Dendritic cell treated with granulocyte-macrophage colony-stimulating factor and Interleukin-4, amounts not matched to agents 40 ng/mL and 50 ng/mL, for 4 days (primary cell): ENCODE measurements at regions of chr7 and their contacts with region 1.

Region 1: DNA sequence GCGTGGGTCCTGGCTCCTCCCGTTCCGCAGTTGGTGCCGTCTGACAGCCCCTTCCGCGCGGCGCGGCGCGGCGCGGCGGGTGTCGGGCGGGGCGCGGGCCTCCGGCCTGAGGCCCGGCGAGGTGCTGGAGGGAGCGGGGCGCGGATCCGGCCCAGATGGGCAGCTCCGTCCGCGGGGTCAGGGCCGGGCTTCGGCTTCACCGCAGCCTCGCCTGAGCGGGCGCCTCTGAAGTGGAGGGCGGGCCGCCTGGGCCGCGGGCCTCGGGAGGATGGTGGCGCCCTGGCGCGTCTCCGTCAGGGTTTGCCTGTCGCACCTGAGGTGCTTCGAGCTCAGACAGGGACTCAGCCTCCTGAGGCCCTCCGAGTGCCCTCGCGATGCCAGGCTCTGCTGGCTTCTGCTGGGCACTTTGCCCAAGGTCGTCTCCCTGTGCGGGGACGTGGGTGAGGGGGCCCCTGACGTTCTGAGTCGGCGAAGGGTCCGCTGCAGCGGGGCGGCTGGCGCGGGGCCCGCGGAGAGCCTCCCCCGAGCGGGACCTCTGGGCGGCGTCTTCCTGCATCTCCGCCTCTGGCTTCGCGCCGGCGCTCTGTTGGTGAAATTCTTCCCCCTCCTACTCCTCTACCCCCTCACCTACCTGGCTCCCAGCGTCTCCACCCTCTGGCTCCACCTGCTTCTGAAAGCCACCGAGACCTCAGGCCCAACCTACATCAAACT is 473 bp downstream of the ADCK2 start:
- H3K4me3 Mint-ChIP-seq: peak overlapping the region; percentile 92
- H3K27ac Mint-ChIP-seq: peak overlapping the region; percentile 87
- H3K4me1 Mint-ChIP-seq: peaks cover 56% of the 10 kb centered on the region
- H3K27me3 Mint-ChIP-seq: no peaks in the 10 kb centered on the region

Region 2: DNA sequence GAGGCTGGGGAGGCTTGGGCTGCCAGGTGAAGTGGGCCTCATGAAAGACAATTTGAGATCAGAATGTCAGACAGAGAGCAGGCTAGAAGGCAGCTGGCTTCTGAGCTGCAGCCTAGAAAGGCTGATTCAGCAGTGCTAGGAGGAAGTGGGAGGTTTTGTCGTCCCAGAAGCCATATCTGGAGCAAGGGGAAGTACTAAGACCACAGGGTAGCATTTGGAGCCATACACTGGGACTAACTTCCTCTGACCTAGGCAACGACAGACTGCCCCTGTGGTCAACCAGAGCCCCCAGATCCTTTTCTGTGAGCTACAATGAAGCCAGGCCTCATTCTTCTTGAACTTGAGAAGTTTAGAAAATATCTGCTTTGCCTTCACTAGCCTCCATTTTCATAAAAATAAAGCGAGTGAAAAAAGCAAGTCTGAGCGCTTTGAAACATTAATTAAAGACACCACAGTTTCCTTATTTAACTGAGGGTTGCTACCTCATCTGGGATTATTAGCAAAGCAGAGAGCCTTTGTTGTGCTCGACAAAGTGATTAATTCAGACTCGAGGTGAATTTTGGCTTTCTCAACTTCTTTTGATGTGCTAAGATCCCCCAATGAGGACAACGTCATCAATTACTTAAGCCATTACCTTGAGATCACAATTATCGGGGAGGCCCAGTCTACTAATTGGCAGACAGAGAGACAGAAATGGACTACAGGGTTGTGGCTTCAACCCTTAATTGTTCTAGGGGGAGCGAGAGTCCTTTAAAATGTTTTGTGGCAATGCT is 817.5 kb before region 1 on chr7:
- intact Hi-C with region 1: no loop called
- H3K4me3 Mint-ChIP-seq: peak overlapping the region; percentile 32
- H3K27ac Mint-ChIP-seq: peak overlapping the region; percentile 93
- H3K4me1 Mint-ChIP-seq: peaks cover 82% of the 10 kb centered on the region
- H3K27me3 Mint-ChIP-seq: no peaks in the 10 kb centered on the region

Region 3: GRCh38 chr7:140609646-140610045 is 63.6 kb before region 1 on chr7:
- intact Hi-C with region 1: no loop called
- H3K4me3 Mint-ChIP-seq: no peak overlapping the region
- H3K27ac Mint-ChIP-seq: no peak overlapping the region
- H3K4me1 Mint-ChIP-seq: no peaks in the 10 kb centered on the region
- H3K27me3 Mint-ChIP-seq: peaks cover 11% of the 10 kb centered on the region

Region 4: GRCh38 chr7:140659856-140660255 is 13.4 kb before region 1 on chr7:
- intact Hi-C with region 1: loop called (anchors 2 kb)
- H3K4me3 Mint-ChIP-seq: no peak overlapping the region
- H3K27ac Mint-ChIP-seq: no peak overlapping the region
- H3K4me1 Mint-ChIP-seq: peaks cover 33% of the 10 kb centered on the region
- H3K27me3 Mint-ChIP-seq: peaks cover 16% of the 10 kb centered on the region

Region 5: GRCh38 chr7:140696680-140697446 is 23.6 kb after region 1 on chr7 and contains the start of gene NDUFB2:
- intact Hi-C with region 1: loop called (anchors 2 kb)
- H3K4me3 Mint-ChIP-seq: peak within 1 kb of the TSS; percentile 94
- H3K27ac Mint-ChIP-seq: peak within 1 kb of the TSS; percentile 98
- H3K4me1 Mint-ChIP-seq: peaks cover 35% of the 10 kb centered on the region
- H3K27me3 Mint-ChIP-seq: no peaks in the 10 kb centered on the region